Gastrocnemius medialis (tissue), 4 donors: ENCODE measurements at regions of chr9 and their contacts with region 1.

Region 1: GRCh38 chr9:15422372-15423230 is at the start of gene SNAPC3:
- DNase-seq: peak; percentile 83 to 88
- ATAC-seq: peak; percentile 97 to 98
- H3K4me3 ChIP-seq: peak within 1 kb of the TSS; percentile 86 to 100 (median 89)
- H3K27ac ChIP-seq: peak within 1 kb of the TSS; percentile 86 to 91 (median 90)
- H3K4me1 ChIP-seq: peaks cover 6 to 16% of the 10 kb centered on the region in 2 donors
- H3K27me3 ChIP-seq: no peaks in the 10 kb centered on the region
- CTCF ChIP-seq: peak in 2 of 5 experiments; percentile 16 to 18
- POLR2A ChIP-seq: peak; percentile 50 to 51
- total RNA-seq, gene SNAPC3: 18.3 to 31.9 (median 20.3) TPM

Region 2: GRCh38 chr9:13787234-13787833 is 1635.3 kb before region 1 on chr9:
- in situ Hi-C with region 1: no loop called
- intact Hi-C with region 1: loop called (anchors 5 kb)
- DNase-seq: peak; percentile 25 to 42
- ATAC-seq: peak; percentile 94 to 96
- H3K4me3 ChIP-seq: peak overlapping the region; percentile 37 to 45 (median 40)
- H3K27ac ChIP-seq: peak overlapping the region; percentile 73 to 84 (median 75)
- H3K4me1 ChIP-seq: peaks cover 19 to 21% of the 10 kb centered on the region in 2 donors
- H3K27me3 ChIP-seq: no peaks in the 10 kb centered on the region
- CTCF ChIP-seq: no peak
- POLR2A ChIP-seq: no peak

Region 3: GRCh38 chr9:15277400-15278090 is 145.1 kb before region 1 on chr9:
- in situ Hi-C with region 1: no loop called
- intact Hi-C with region 1: loop called (anchors 5 kb)
- DNase-seq: no peak
- ATAC-seq: peak in 1 of 2 donors; percentile 61
- H3K4me3 ChIP-seq: no peak overlapping the region
- H3K27ac ChIP-seq: no peak overlapping the region
- H3K4me1 ChIP-seq: peaks cover 4 to 7% of the 10 kb centered on the region in 2 donors
- H3K27me3 ChIP-seq: no peaks in the 10 kb centered on the region
- CTCF ChIP-seq: peak in 3 of 5 experiments; percentile 19 to 37 (median 27)
- POLR2A ChIP-seq: no peak

Region 4: DNA sequence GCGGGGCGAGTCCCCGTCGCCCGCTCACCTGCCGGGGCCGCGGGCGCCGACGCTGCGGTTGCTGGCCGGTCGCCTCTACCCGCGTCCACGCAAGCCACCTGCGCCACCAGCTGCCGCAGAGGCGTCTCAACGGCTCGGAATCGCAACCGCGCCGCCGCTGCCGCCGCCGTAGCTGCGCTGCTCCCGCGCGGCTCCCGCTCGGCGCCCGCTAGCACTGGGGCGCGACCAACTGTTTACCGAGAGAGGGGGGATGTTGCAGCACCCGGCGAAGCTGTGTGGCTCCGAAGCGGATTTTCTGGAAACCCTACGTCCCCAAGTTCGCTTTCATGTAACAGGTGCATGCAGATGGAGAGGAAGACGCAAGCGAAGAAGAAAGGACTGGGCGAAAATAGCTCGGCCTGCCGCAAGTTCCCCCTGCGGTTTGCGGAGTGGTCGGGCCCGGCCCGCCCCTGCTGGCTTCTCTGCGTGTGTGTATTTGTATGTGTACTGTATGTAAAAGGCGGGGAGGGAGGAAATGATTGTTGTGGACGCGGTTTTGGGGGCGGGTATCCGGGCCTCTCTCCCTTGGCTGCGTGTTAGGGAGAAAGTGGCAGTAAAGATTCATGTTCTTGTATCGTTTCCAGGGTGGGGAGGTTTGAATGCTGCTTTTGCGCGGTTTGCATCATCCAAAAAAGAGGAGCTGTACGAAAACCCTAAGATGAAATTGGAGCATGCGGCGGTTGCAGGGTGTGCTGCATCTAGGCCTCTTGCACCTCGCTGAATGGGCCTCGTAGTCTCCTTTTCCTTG is 88.4 kb after region 1 on chr9 and contains the start of gene PSIP1:
- in situ Hi-C with region 1: no loop called
- intact Hi-C with region 1: loop called (anchors 2 kb)
- DNase-seq: peak; percentile 32 to 52
- ATAC-seq: peak; percentile 92
- H3K4me3 ChIP-seq: peak within 1 kb of the TSS; percentile 74 to 92 (median 86)
- H3K27ac ChIP-seq: peak within 1 kb of the TSS; percentile 75 to 92 (median 89)
- H3K4me1 ChIP-seq: peaks cover 5 to 18% of the 10 kb centered on the region in 2 donors
- H3K27me3 ChIP-seq: no peaks in the 10 kb centered on the region
- CTCF ChIP-seq: peak in 4 of 5 experiments; percentile 6 to 31 (median 21)
- POLR2A ChIP-seq: peak; percentile 36 to 46
- total RNA-seq, gene PSIP1: 11.7 to 21.3 (median 12.5) TPM

Region 5: GRCh38 chr9:15552636-15553527 is 130.3 kb after region 1 on chr9 and contains the start of gene CCDC171:
- in situ Hi-C with region 1: no loop called
- intact Hi-C with region 1: loop called (anchors 1 kb)
- DNase-seq: peak; percentile 81 to 86
- ATAC-seq: peak; percentile 95 to 96
- H3K4me3 ChIP-seq: peak within 1 kb of the TSS; percentile 69 to 90 (median 83)
- H3K27ac ChIP-seq: peak within 1 kb of the TSS; percentile 68 to 80 (median 76)
- H3K4me1 ChIP-seq: no peaks in the 10 kb centered on the region
- H3K27me3 ChIP-seq: no peaks in the 10 kb centered on the region
- CTCF ChIP-seq: no peak
- POLR2A ChIP-seq: peak; percentile 31 to 46
- total RNA-seq, gene CCDC171: 0.61 to 1.7 (median 1.3) TPM